Endothelial cell of umbilical vein (primary cell): ENCODE measurements at regions of chr3 and their contacts with region 1.

Region 1: DNA sequence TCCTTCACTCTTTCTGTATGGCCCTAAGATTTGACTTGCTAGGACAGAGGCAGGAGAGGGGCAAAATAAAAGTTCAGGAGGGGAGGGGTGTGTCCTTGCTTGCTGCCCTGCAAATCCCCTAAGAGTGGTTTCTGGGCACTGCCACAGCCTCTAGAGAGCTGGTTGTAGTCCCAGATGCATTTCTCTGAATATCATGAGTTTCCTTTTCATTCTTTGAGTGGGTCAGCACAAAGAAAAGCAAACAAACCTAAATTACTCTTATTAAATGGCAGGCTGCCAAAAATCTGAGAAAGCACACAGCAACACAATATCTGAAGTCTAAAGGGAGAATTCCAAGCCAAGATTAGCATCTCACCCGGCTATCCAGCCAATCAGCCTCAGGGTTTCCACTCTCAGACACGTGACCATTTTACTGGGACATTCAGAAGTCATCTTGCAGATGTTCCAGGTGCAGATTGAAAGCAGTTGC is 919.3 kb downstream of the TUSC7 start:
- DNase-seq: peak; percentile 95
- H3K4me3 ChIP-seq: no peak overlapping the region
- H3K27ac ChIP-seq: peak overlapping the region; percentile 71
- H3K4me1 ChIP-seq: peaks cover 14% of the 10 kb centered on the region
- H3K27me3 ChIP-seq: no peaks in the 10 kb centered on the region
- CTCF ChIP-seq: no peak
- POLR2A ChIP-seq: no peak

Region 2: DNA sequence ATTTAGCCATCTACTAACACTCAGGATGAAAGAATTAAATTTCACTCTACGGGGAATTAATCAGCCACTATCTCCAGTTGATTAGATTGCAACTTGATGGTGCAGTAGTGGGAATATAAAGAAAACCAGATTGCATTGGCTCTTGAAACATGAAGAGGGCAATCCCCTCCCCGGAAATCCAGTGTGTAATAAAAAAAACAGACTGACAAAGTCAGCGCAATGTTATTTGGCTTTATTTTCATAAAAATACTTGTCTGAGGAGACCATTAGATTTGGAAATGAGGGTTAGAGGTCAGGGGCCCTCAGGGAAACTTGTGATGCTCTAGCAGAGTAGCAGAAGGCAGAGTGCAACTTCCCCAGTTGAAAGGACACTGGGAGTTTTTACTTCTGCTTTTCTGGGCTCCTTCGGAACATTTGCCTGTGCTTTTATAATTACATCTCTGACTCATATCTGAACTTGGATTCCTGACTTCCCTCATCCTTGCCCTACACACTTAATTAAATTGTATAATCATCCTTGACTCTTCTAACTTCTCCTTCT is 592.5 kb before region 1 on chr3:
- CTCF ChIA-PET with region 1: no interaction called
- POLR2A ChIA-PET with region 1: no interaction called
- dilution Hi-C with region 1: no loop called
- intact Hi-C with region 1: loop called (anchors 10 kb)
- DNase-seq: peak; percentile 53
- H3K4me3 ChIP-seq: no peak overlapping the region
- H3K27ac ChIP-seq: peak overlapping the region; percentile 63
- H3K4me1 ChIP-seq: peaks cover 18% of the 10 kb centered on the region
- H3K27me3 ChIP-seq: no peaks in the 10 kb centered on the region
- CTCF ChIP-seq: no peak
- POLR2A ChIP-seq: no peak

Region 3: GRCh38 chr3:117692416-117692995 is 63.6 kb after region 1 on chr3:
- CTCF ChIA-PET with region 1: no interaction called
- POLR2A ChIA-PET with region 1: no interaction called
- dilution Hi-C with region 1: no loop called
- intact Hi-C with region 1: loop called (anchors 5 kb)
- DNase-seq: peak; percentile 77
- H3K4me3 ChIP-seq: no peak overlapping the region
- H3K27ac ChIP-seq: no peak overlapping the region
- H3K4me1 ChIP-seq: peaks cover 7% of the 10 kb centered on the region
- H3K27me3 ChIP-seq: no peaks in the 10 kb centered on the region
- CTCF ChIP-seq: no peak
- POLR2A ChIP-seq: peak; percentile 38